ENCODE measurements at regions of chr17 and their contacts with region 1.

Region 1: GRCh38 chr17:4100883-4101756 is 41.7 kb downstream of the ZZEF1 start:
- DNase-seq: no peak

Region 2: GRCh38 chr17:4143563-4144421 is 42.7 kb after region 1 on chr17:
- intact Hi-C with region 1: loop called (anchors 5 kb)
- DNase-seq: peak; percentile 78 to 98 (median 89)

Region 3: GRCh38 chr17:4220655-4221054 is 119.5 kb after region 1 on chr17:
- intact Hi-C with region 1: no loop called
- DNase-seq: no peak

Measured in posterior cingulate gyrus (tissue), 11 donors.